ENCODE measurements at regions of chr3 and their contacts with region 1.

Region 1: DNA sequence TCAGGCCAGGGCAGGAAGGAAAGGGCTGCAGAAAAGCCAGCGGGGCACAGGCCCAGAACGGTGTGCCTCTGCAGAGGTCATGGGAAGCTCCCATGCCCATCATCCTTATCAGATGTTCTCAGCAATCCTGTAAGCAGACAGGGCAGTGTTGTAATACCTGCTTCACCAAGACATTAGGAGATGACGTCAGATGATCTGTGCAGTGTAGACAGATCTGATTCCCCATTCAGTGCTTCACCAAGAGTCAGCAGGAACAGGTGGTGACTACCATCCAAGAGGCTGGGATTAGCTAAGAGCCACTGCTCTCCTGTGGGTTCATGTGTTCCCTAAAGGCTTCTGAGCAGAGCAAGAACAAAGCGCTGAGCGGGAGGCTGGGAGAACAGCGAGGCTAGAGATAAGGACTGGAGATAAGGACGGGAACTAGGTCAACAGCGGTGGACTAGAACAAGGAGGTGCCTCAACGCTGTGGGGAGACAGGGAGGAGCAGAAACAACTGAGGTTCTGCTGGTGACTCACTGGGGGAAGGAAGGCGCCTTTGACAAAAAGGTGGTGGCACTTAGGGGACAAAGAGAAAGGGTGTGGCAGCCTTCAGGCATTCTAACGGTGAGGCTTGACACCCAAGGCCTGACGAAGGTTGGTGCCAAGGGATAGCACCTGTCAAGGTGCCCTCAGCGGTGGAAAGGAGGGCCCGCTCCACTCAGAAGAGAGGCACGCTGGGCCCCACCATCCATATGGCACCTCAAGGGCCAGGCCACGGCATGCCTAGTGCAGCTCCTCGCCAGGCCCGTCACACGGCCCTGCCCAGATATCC is 28.4 kb downstream of the CCDC12 start:
- DNase-seq: peak; percentile 57
- H3K4me3 Mint-ChIP-seq: peak overlapping the region; percentile 53
- H3K27ac Mint-ChIP-seq: peak overlapping the region; percentile 79
- H3K4me1 Mint-ChIP-seq: peaks cover 85% of the 10 kb centered on the region
- H3K27me3 Mint-ChIP-seq: no peaks in the 10 kb centered on the region

Region 2: GRCh38 chr3:46909535-46910442 is 38.4 kb before region 1 on chr3:
- intact Hi-C with region 1: loop called (anchors 2 kb)
- DNase-seq: peak; percentile 61
- H3K4me3 Mint-ChIP-seq: no peak overlapping the region
- H3K27ac Mint-ChIP-seq: no peak overlapping the region
- H3K4me1 Mint-ChIP-seq: peaks cover 15% of the 10 kb centered on the region
- H3K27me3 Mint-ChIP-seq: no peaks in the 10 kb centered on the region

Region 3: GRCh38 chr3:46931631-46932331 is 16.4 kb before region 1 on chr3:
- intact Hi-C with region 1: loop called (anchors 2 kb)
- DNase-seq: no peak
- H3K4me3 Mint-ChIP-seq: peak overlapping the region; percentile 25
- H3K27ac Mint-ChIP-seq: peak overlapping the region; percentile 85
- H3K4me1 Mint-ChIP-seq: peaks cover 68% of the 10 kb centered on the region
- H3K27me3 Mint-ChIP-seq: no peaks in the 10 kb centered on the region

Region 4: DNA sequence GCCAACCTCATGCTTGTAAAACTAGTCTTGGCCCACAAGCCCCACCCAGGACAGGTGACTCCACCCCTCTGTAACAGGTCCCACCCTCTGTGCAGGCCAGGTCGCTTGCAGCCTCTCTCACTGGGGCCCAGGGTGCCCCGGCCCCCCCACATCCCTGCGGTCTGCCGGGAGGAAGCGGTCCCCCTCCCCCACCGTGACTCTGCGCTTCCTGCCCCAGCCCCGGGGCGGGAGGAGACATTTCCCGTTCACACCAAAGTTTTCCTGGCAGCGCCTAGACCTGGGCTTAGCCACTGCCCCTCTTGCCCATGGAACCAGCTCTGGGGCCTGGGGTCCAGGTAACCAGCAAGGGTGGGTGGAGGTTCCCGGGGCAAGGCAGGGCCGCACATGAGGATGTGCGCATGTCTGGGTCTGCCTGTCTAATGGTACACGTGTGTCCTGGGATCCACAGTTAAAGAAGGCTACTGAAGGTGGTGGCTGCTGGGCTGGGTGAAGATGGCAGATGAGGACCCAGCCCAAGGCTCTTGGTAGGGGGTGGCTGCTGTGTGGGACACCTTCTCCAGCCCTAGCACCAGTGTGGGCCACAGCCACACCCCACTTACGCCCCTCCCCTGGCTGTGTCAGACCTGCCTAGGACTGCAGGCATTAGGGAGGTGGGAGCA is 39.7 kb after region 1 on chr3:
- intact Hi-C with region 1: loop called (anchors 2 kb)
- DNase-seq: peak; percentile 91
- H3K4me3 Mint-ChIP-seq: peak overlapping the region; percentile 83
- H3K27ac Mint-ChIP-seq: peak overlapping the region; percentile 94
- H3K4me1 Mint-ChIP-seq: peaks cover 79% of the 10 kb centered on the region
- H3K27me3 Mint-ChIP-seq: no peaks in the 10 kb centered on the region

Region 5: GRCh38 chr3:47365213-47366153 is 417.3 kb after region 1 on chr3:
- intact Hi-C with region 1: no loop called
- DNase-seq: no peak
- H3K4me3 Mint-ChIP-seq: no peak overlapping the region
- H3K27ac Mint-ChIP-seq: no peak overlapping the region
- H3K4me1 Mint-ChIP-seq: peaks cover 9% of the 10 kb centered on the region
- H3K27me3 Mint-ChIP-seq: peaks cover 4% of the 10 kb centered on the region

Region 6: GRCh38 chr3:47503033-47503432 is 554.8 kb after region 1 on chr3:
- intact Hi-C with region 1: no loop called
- DNase-seq: no peak
- H3K4me3 Mint-ChIP-seq: no peak overlapping the region
- H3K27ac Mint-ChIP-seq: no peak overlapping the region
- H3K4me1 Mint-ChIP-seq: no peaks in the 10 kb centered on the region
- H3K27me3 Mint-ChIP-seq: no peaks in the 10 kb centered on the region

Measured in activated T-helper 1 cell treated with anti-CD3 and anti-CD28 coated beads, Interleukin-12 subunit alpha, Interleukin-12 subunit beta, Interleukin-2, Interleukin-4 antibody, amounts not matched to agents 30 ng/mL and 10 ng/mL and 1 ng/mL, durations not matched to agents 14 hours and 24 hours and 36 hours (primary cell).